ENCODE measurements at regions of chr10 and their contacts with region 1.

Region 1: DNA sequence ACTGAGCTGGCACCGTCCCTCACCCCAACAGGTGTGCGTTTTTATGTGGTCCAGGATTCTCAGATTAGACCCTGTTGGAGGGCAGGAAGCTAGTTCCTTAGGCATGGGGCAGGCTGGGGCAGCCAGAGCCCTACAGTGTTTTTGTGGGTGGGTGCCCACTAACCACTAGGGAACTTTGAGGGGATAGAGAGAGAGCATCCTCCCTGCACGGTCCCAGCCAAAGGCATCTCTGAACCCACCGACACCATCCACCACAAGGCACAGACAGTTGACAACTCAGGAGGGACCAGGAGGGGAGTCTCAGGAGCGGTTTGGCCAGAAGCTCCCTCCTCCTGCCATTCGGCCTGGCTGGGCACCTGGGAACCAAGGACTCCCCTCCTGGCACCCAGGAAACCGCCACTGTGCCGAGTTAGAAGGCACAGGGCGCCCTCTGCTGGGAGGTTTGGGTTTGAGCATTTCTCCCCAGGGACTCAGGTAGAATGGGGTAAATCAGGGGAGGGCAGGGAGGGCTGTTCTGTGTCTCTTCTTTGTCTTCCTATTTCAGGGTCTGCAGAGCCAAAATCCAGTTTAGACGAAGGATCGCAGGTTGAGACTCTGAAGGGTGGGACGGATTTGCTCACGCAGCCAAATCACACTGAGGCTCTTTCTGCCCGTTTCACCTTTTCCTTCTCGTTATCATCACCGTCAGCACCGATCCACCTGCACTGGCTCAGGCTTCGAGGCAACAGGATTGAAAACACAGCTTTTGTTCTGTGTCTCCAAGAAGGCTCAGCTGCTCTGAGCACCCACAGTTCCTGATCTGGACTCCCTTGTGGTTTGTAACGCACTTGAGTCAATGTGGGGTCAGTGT is 84.8 kb upstream of the COL13A1 start:
- DNase-seq: no peak
- ATAC-seq: peak; percentile 82
- H3K4me3 ChIP-seq: no peak overlapping the region
- H3K27ac ChIP-seq: no peak overlapping the region
- H3K4me1 ChIP-seq: no peaks in the 10 kb centered on the region
- H3K27me3 ChIP-seq: peaks cover 0 to 1% of the 10 kb centered on the region in 2 experiments; a peak in 1 of 4 replicates
- CTCF ChIP-seq: peak; percentile 61 to 75 (median 74)
- EP300 ChIP-seq: no peak
- POLR2A ChIP-seq: no peak
- RAD21 ChIP-seq: peak; percentile 63

Region 2: GRCh38 chr10:69515699-69516259 is 201.2 kb before region 1 on chr10:
- CTCF ChIA-PET with region 1: interaction called, 7 read pairs
- POLR2A ChIA-PET with region 1: no interaction called
- RAD21 ChIA-PET with region 1: no interaction called
- SMC1A ChIA-PET with region 1: interaction called, 7 read pairs
- in situ Hi-C with region 1: loop called (anchors 5 kb)
- intact Hi-C with region 1: loop called (anchors 2 kb)
- DNase-seq: peak; percentile 16
- ATAC-seq: peak; percentile 100
- H3K4me3 ChIP-seq: no peak overlapping the region
- H3K27ac ChIP-seq: no peak overlapping the region
- H3K4me1 ChIP-seq: no peaks in the 10 kb centered on the region
- H3K27me3 ChIP-seq: no peaks in the 10 kb centered on the region; a peak in 1 of 4 replicates
- CTCF ChIP-seq: peak; percentile 92 to 98 (median 93); a peak in 5 of 6 replicates
- EP300 ChIP-seq: no peak
- POLR2A ChIP-seq: no peak
- RAD21 ChIP-seq: peak; percentile 85

Region 3: DNA sequence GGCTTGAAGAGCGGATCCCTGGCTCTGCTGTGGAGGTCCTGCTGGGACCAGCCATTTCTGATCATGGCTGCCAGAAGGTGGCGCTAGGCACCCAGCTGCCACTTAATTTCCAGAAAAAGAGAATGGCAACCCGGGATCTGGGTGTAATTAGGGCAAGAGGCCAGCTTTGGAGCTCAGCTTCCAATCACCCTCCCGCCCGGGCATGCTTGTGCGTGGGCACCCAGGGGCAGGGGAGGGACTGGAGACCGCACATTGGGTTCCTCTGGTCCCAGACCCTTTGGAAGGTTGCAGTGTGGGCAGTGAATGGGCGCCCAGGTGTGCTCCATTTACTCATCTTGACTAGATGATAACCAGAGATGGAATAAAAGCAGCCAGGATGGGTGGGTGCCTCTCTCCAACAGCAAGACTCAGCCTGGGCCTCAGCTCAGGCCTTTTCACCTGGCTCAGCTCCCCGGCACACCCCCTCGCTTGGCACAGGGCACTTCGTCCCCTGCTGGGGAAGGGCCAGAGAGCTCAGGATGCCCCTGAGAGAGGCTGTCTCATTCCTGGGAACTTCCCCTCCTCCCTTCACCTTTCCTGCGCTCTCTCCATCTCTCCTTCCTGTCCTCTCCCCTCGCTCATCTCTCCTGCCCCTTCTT is 72.2 kb before region 1 on chr10:
- CTCF ChIA-PET with region 1: interaction called, 30 read pairs
- POLR2A ChIA-PET with region 1: no interaction called
- RAD21 ChIA-PET with region 1: interaction called, 5 read pairs
- SMC1A ChIA-PET with region 1: interaction called, 7 read pairs
- in situ Hi-C with region 1: no loop called
- intact Hi-C with region 1: loop called (anchors 2 kb)
- DNase-seq: no peak
- ATAC-seq: peak; percentile 69
- H3K4me3 ChIP-seq: no peak overlapping the region
- H3K27ac ChIP-seq: no peak overlapping the region
- H3K4me1 ChIP-seq: no peaks in the 10 kb centered on the region
- H3K27me3 ChIP-seq: no peaks in the 10 kb centered on the region
- CTCF ChIP-seq: peak; percentile 68 to 77 (median 74)
- EP300 ChIP-seq: no peak
- POLR2A ChIP-seq: no peak
- RAD21 ChIP-seq: peak; percentile 59